ENCODE measurements at regions of chr15 and their contacts with region 1.

Region 1: GRCh38 chr15:85296615-85297402 is 83.6 kb upstream of the AKAP13 start:
- DNase-seq: peak; percentile 72
- H3K27ac ChIP-seq: no peak overlapping the region
- CTCF ChIP-seq: peak; percentile 93

Region 2: GRCh38 chr15:85330901-85331588 is 34.2 kb after region 1 on chr15:
- CTCF ChIA-PET with region 1: interaction called, 10 read pairs
- POLR2A ChIA-PET with region 1: no interaction called
- DNase-seq: peak; percentile 83
- H3K27ac ChIP-seq: peak overlapping the region; percentile 84
- CTCF ChIP-seq: peak; percentile 98